MCF 10A (cell line): ENCODE measurements at regions of chr22 and their contacts with region 1.

Region 1: DNA sequence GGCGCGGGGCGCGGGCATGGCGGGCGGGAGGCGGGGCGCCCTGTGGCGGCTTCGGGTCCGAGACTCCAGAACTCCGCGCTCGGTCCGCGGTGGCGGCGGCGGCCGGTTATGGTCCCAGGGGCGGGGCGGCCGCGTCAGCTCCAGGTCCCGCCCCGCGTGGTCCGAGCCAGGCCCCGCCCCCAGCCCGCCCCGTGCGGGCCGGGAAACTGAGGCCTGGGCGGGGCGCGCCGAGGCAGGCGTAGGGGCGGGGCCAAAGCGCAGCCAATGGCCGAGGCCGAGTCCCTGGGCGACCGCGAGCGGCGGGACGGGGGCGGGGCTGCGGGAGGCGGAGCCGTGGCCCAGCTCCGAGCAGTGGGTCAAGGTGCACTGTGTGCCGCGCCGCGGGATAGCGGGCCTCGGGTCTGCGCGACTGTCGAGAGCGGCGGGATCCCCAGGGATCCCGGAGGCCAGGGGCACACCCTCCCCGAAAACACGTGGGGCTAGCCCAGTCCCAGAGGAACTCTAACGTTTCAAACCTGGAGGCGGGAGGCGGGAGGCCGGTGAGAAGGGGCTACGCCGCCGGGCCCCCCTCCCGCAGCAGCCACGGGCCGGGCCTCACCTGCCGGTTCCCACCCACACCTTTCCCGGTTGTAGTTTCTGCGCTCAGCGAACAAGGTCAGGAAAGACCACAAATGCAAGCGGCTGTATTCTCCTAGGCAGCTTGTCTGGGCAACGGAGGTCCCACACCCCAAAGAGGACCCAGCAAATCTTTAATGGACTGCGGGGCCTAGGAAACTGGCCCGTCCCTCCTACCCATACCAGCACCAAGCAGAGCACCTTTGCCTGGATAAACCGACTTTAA is at the start of gene SLC25A1:
- DNase-seq: peak; percentile 90
- H3K4me3 Mint-ChIP-seq: peak within 1 kb of the TSS; percentile 75
- H3K27ac Mint-ChIP-seq: peak within 1 kb of the TSS; percentile 31
- H3K4me1 Mint-ChIP-seq: peaks cover 18% of the 10 kb centered on the region
- H3K27me3 Mint-ChIP-seq: no peaks in the 10 kb centered on the region
- CTCF ChIP-seq: no peak
- total RNA-seq, gene SLC25A1: 41.0 and 53.9 TPM in 2 replicates

Region 2: DNA sequence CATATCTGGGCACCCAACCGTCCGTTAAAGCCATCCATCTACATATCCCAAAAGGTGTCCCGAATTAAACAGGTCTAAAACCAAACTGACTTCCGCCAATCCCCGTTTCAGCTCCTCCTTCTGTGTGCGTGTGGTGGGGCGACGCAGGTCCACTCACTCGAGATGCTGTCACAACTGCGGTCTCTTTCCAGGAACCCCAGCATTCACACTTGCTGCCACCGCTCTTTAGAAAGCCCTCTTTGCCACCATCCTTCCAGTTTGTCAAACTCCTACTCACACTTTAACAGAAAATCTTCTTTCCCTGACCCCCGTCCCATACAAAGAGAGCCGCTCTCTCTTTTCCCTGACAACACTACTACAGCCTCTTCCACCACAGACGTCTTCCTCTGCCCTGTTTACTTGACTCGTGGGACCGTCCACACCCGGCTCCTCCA is 34.9 kb before region 1 on chr22:
- CTCF ChIA-PET with region 1: interaction called, 5 read pairs
- POLR2A ChIA-PET with region 1: interaction called, 30 read pairs
- intact Hi-C with region 1: no loop called
- DNase-seq: no peak
- H3K4me3 Mint-ChIP-seq: peak overlapping the region; percentile 100
- H3K27ac Mint-ChIP-seq: peak overlapping the region; percentile 99
- H3K4me1 Mint-ChIP-seq: peaks cover 11% of the 10 kb centered on the region
- H3K27me3 Mint-ChIP-seq: no peaks in the 10 kb centered on the region
- CTCF ChIP-seq: no peak

Region 3: GRCh38 chr22:19376247-19376646 is 197.4 kb after region 1 on chr22:
- CTCF ChIA-PET with region 1: no interaction called
- POLR2A ChIA-PET with region 1: no interaction called
- intact Hi-C with region 1: no loop called
- DNase-seq: no peak
- H3K4me3 Mint-ChIP-seq: no peak overlapping the region
- H3K27ac Mint-ChIP-seq: no peak overlapping the region
- H3K4me1 Mint-ChIP-seq: no peaks in the 10 kb centered on the region
- H3K27me3 Mint-ChIP-seq: no peaks in the 10 kb centered on the region
- CTCF ChIP-seq: no peak

Region 4: DNA sequence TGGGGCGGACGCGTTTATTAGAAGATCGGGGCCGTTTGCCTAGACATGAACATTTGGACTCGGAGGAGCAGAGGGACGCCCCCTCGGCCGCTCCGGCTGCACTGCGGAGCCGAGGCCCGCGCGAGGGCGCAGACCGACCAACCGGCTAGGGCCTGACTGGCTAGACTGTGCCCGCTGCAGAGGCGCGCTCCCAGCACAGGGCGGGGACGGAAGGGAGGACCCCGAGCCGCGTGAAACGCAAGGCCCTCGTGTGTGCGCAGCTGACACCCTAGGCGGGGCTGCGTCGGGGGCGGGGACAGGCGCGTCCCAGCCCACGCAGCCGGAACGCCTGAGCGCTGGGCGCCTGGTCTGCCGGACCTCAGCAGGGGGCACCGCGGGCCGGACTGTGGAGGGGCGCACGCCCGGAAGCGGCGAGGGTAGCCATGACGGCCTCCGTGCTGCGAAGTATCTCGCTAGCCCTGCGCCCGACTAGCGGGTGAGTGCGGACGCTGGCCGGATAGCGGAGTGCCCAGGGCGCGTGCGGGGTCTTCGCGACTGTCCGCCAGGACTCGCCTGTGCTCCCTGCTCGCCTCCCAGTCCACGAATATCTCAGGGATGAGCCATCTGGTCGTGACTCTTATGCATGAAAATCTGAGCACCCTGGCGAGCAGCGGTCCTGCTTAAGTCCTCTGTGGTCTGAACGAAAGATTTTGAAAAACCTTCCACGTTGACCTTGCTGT is 253.4 kb after region 1 on chr22 and contains the start of gene MRPL40:
- CTCF ChIA-PET with region 1: no interaction called
- POLR2A ChIA-PET with region 1: interaction called, 22 read pairs
- intact Hi-C with region 1: loop called (anchors 1 kb)
- DNase-seq: peak; percentile 94
- H3K4me3 Mint-ChIP-seq: peak within 1 kb of the TSS; percentile 86
- H3K27ac Mint-ChIP-seq: peak within 1 kb of the TSS; percentile 91
- H3K4me1 Mint-ChIP-seq: peaks cover 11% of the 10 kb centered on the region
- H3K27me3 Mint-ChIP-seq: no peaks in the 10 kb centered on the region
- CTCF ChIP-seq: no peak
- total RNA-seq, gene MRPL40: 51.9 and 66.7 TPM in 2 replicates

Region 5: DNA sequence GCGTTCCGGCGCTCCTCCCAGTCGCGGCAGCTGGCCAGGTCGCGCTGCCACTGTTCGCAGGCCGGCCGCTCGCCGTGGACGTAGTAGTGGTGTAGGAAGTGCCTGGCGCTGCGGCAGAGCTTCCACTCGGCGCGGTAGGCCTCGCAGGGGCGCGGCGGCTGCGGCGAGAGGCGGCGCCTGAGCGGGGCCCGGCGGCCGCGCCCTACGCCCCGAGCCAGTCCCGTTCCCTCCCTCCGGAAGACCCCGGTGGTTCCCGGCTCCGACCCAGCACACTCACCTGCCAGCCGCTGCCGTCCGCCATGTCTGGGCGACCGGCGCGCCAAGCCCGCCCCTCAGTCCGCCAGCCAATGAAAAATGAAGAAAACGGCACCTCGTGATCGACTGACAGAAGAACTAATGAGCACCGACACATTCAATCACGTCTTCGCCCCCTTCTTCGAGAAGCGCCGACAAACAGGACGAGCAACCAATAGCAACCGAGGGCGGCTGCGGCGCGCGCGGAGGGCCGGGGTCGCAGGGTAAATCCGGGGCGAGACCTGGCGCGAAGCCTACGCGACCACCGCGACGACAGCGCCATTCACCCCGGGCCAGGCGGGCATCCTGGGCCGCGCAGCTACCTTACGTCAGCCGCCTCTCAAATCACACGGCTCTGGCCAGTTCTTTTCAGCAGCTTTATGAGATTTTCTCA is 268.7 kb after region 1 on chr22 and contains the start of gene C22orf39:
- CTCF ChIA-PET with region 1: no interaction called
- POLR2A ChIA-PET with region 1: interaction called, 5 read pairs
- intact Hi-C with region 1: loop called (anchors 5 kb)
- DNase-seq: peak; percentile 93
- H3K4me3 Mint-ChIP-seq: peak within 1 kb of the TSS; percentile 73
- H3K27ac Mint-ChIP-seq: peak within 1 kb of the TSS; percentile 9
- H3K4me1 Mint-ChIP-seq: peaks cover 16% of the 10 kb centered on the region
- H3K27me3 Mint-ChIP-seq: no peaks in the 10 kb centered on the region
- CTCF ChIP-seq: no peak
- total RNA-seq, gene C22orf39: 19.1 and 22.2 TPM in 2 replicates